ENCODE measurements at regions of chr9 and their contacts with region 1.

Region 1: GRCh38 chr9:75797085-75797580 is 93.3 kb upstream of the PCSK5 start:
- DNase-seq: no peak
- H3K4me3 Mint-ChIP-seq: no peak overlapping the region
- H3K27ac Mint-ChIP-seq: no peak overlapping the region
- H3K4me1 Mint-ChIP-seq: no peaks in the 10 kb centered on the region
- H3K27me3 Mint-ChIP-seq: peaks cover 16% of the 10 kb centered on the region
- CTCF ChIP-seq: no peak

Region 2: GRCh38 chr9:75699017-75699416 is 98.1 kb before region 1 on chr9:
- CTCF ChIA-PET with region 1: no interaction called
- intact Hi-C with region 1: loop called (anchors 10 kb)
- DNase-seq: no peak
- H3K4me3 Mint-ChIP-seq: no peak overlapping the region
- H3K27ac Mint-ChIP-seq: no peak overlapping the region
- H3K4me1 Mint-ChIP-seq: no peaks in the 10 kb centered on the region
- H3K27me3 Mint-ChIP-seq: peaks cover 42% of the 10 kb centered on the region
- CTCF ChIP-seq: no peak